ENCODE measurements at regions of chr19 and their contacts with region 1.

Region 1: GRCh38 chr19:4909897-4910593 is 744 bp downstream of the UHRF1 start:
- DNase-seq: peak; percentile 92
- H3K4me3 ChIP-seq: peak overlapping the region; percentile 59 to 80 (median 70)
- H3K27ac ChIP-seq: peak overlapping the region in 3 of 4 donors; percentile 46 to 71 (median 49)
- H3K4me1 ChIP-seq: peaks cover 18 to 33% (median 26%) of the 10 kb centered on the region in 4 donors
- H3K27me3 ChIP-seq: peaks cover 10% of the 10 kb centered on the region
- CTCF ChIP-seq: no peak
- EP300 ChIP-seq: no peak
- POLR2A ChIP-seq: no peak

Region 2: GRCh38 chr19:4164262-4164661 is 745.8 kb before region 1 on chr19:
- in situ Hi-C with region 1: no loop called
- intact Hi-C with region 1: no loop called
- DNase-seq: no peak
- H3K4me3 ChIP-seq: no peak overlapping the region
- H3K27ac ChIP-seq: no peak overlapping the region
- H3K4me1 ChIP-seq: no peaks in the 10 kb centered on the region
- H3K27me3 ChIP-seq: peaks cover 32% of the 10 kb centered on the region
- CTCF ChIP-seq: no peak
- EP300 ChIP-seq: no peak
- POLR2A ChIP-seq: no peak

Region 3: GRCh38 chr19:4815426-4816201 is 94.4 kb before region 1 on chr19:
- in situ Hi-C with region 1: loop called in 1 of 4 experiments (anchors 25 kb)
- intact Hi-C with region 1: loop called (anchors 1 kb)
- DNase-seq: peak; percentile 91
- H3K4me3 ChIP-seq: peak overlapping the region in 2 of 4 donors; percentile 13 to 33
- H3K27ac ChIP-seq: peak overlapping the region; percentile 7 to 47 (median 15)
- H3K4me1 ChIP-seq: peaks cover 0 to 22% (median 10%) of the 10 kb centered on the region in 4 donors
- H3K27me3 ChIP-seq: no peaks in the 10 kb centered on the region
- CTCF ChIP-seq: no peak
- EP300 ChIP-seq: no peak
- POLR2A ChIP-seq: peak; percentile 36

Region 4: GRCh38 chr19:4867534-4868285 is 42.3 kb before region 1 on chr19 and contains the start of gene PLIN3:
- in situ Hi-C with region 1: loop called in 1 of 4 experiments (anchors 5 kb)
- intact Hi-C with region 1: no loop called
- DNase-seq: peak; percentile 98
- H3K4me3 ChIP-seq: peak within 1 kb of the TSS; percentile 75 to 92 (median 83)
- H3K27ac ChIP-seq: peak within 1 kb of the TSS; percentile 88 to 94 (median 90)
- H3K4me1 ChIP-seq: peaks cover 0 to 27% (median 13%) of the 10 kb centered on the region in 4 donors
- H3K27me3 ChIP-seq: no peaks in the 10 kb centered on the region
- CTCF ChIP-seq: no peak
- EP300 ChIP-seq: no peak
- POLR2A ChIP-seq: peak; percentile 67
- total RNA-seq, gene PLIN3: 27.5 to 85.5 (median 77.1) TPM

Region 5: DNA sequence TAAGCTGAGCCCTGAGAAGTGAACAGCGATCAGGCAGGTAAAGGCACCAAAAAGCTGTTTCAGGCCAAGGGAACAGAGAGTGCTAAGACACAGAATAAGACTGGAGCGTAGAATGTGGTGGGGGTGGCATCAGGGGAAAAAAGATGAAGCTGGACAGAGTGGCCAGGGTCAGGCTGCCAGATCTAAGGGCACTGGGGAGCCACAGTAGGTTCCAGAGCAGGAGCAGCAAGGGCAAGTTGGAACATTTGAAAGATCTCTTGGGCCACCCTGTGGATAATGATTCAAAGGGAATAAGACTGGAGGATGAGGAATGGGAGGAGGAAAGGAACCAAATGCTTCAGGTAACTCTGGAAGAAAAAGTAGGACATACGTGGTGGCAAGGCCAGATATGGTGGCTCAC is 36.1 kb before region 1 on chr19:
- in situ Hi-C with region 1: loop called in 1 of 4 experiments (anchors 5 kb)
- intact Hi-C with region 1: loop called (anchors 1 kb)
- DNase-seq: no peak
- H3K4me3 ChIP-seq: no peak overlapping the region
- H3K27ac ChIP-seq: no peak overlapping the region
- H3K4me1 ChIP-seq: peaks cover 0 to 11% (median 5%) of the 10 kb centered on the region in 4 donors
- H3K27me3 ChIP-seq: no peaks in the 10 kb centered on the region
- CTCF ChIP-seq: no peak
- EP300 ChIP-seq: no peak
- POLR2A ChIP-seq: no peak

Measured in transverse colon (tissue), 4 donors.